Naive thymus-derived CD4-positive, alpha-beta T cell (primary cell): ENCODE measurements at regions of chr16 and their contacts with region 1.

Region 1: DNA sequence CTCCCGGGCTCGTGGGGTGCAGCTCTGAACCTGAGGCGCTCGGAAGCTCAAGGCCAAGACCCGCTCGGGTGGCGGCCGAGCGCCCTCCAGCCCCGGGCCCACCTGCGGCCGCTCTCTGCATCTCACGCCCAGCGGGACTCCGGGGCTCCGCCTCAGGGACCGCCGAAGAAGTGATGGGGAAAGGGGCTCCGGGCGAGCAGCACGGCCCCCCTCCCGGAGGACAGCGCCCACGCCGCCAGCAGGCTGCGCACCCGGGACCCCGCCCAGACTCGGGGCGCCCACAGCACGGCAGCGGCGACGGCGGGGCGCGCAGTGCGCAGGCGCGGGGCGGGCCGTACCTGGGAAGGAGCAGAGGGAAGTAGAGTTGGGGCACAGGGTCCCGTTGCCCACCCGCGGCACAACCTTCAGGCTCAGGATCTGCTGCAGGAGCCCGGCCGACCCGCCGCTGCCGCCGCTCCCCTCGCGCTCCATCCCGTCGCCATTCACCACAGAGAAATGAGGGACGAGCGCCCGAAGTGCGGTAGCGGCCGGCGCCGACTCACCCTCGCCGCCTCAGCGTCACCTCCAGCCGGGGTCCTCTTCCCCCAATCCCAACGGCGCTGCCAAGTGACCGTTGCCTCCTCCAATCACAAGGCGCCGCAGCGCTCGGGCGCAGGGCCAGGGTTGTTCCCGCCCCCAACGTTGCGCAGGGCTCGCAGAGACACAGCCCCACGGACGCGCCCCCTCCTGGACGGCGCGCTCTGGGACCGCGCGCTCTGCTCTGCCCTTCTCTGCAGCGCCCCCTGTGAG is at the start of gene TMEM170A:
- DNase-seq: peak; percentile 96 to 99 (median 99)
- ATAC-seq: peak; percentile 95
- H3K4me3 ChIP-seq: peak within 1 kb of the TSS; percentile 93
- H3K4me3 Mint-ChIP-seq: peak within 1 kb of the TSS; percentile 86 to 98 (median 93)
- H3K27ac ChIP-seq: peak within 1 kb of the TSS; percentile 93
- H3K27ac Mint-ChIP-seq: peak within 1 kb of the TSS; percentile 75 to 97 (median 93)
- H3K4me1 ChIP-seq: peaks cover 26 to 31% of the 10 kb centered on the region in 2 donors
- H3K4me1 Mint-ChIP-seq: peaks cover 31 to 49% (median 44%) of the 10 kb centered on the region in 7 donors
- H3K27me3 ChIP-seq: no peaks in the 10 kb centered on the region
- H3K27me3 Mint-ChIP-seq: peaks cover 0 to 5% (median 0%) of the 10 kb centered on the region in 5 donors
- total RNA-seq, gene TMEM170A: 31.0 to 50.9 (median 46.6) TPM

Region 2: GRCh38 chr16:74372953-74373846 is 1091.1 kb before region 1 on chr16:
- CTCF ChIA-PET with region 1: no interaction called
- POLR2A ChIA-PET with region 1: no interaction called
- intact Hi-C with region 1: loop called in 1 of 2 experiments (anchors 5 kb)
- DNase-seq: no peak
- ATAC-seq: no peak
- H3K4me3 ChIP-seq: no peak overlapping the region
- H3K4me3 Mint-ChIP-seq: no peak overlapping the region
- H3K27ac ChIP-seq: no peak overlapping the region
- H3K27ac Mint-ChIP-seq: peak overlapping the region in 2 of 9 donors; percentile 18 to 86
- H3K4me1 ChIP-seq: no peaks in the 10 kb centered on the region
- H3K4me1 Mint-ChIP-seq: peaks cover 0 to 4% (median 0%) of the 10 kb centered on the region in 7 donors
- H3K27me3 ChIP-seq: no peaks in the 10 kb centered on the region
- H3K27me3 Mint-ChIP-seq: no peaks in the 10 kb centered on the region

Region 3: GRCh38 chr16:75198135-75198600 is 266.2 kb before region 1 on chr16:
- CTCF ChIA-PET with region 1: interaction called, 4 read pairs
- POLR2A ChIA-PET with region 1: no interaction called
- intact Hi-C with region 1: loop called (anchors 1 kb)
- DNase-seq: no peak
- ATAC-seq: no peak
- H3K4me3 ChIP-seq: no peak overlapping the region
- H3K4me3 Mint-ChIP-seq: no peak overlapping the region
- H3K27ac ChIP-seq: no peak overlapping the region
- H3K27ac Mint-ChIP-seq: no peak overlapping the region
- H3K4me1 ChIP-seq: peaks cover 0 to 14% of the 10 kb centered on the region in 2 donors
- H3K4me1 Mint-ChIP-seq: peaks cover 10 to 29% (median 22%) of the 10 kb centered on the region in 7 donors
- H3K27me3 ChIP-seq: peaks cover 0 to 3% of the 10 kb centered on the region in 2 donors
- H3K27me3 Mint-ChIP-seq: peaks cover 12 to 24% (median 14%) of the 10 kb centered on the region in 5 donors

Region 4: GRCh38 chr16:75432828-75433731 is 31.2 kb before region 1 on chr16 and contains the start of gene CFDP1:
- CTCF ChIA-PET with region 1: interaction called, 9 read pairs
- POLR2A ChIA-PET with region 1: interaction called, 25 read pairs
- intact Hi-C with region 1: loop called in 1 of 2 experiments (anchors 1 kb)
- DNase-seq: peak; percentile 93 to 98 (median 95)
- ATAC-seq: peak; percentile 92
- H3K4me3 ChIP-seq: peak within 1 kb of the TSS; percentile 92
- H3K4me3 Mint-ChIP-seq: peak within 1 kb of the TSS; percentile 87 to 99 (median 94)
- H3K27ac ChIP-seq: peak within 1 kb of the TSS; percentile 94
- H3K27ac Mint-ChIP-seq: peak within 1 kb of the TSS; percentile 94 to 100 (median 97)
- H3K4me1 ChIP-seq: peaks cover 5 to 9% of the 10 kb centered on the region in 2 donors
- H3K4me1 Mint-ChIP-seq: peaks cover 19 to 53% (median 43%) of the 10 kb centered on the region in 7 donors
- H3K27me3 ChIP-seq: no peaks in the 10 kb centered on the region
- H3K27me3 Mint-ChIP-seq: no peaks in the 10 kb centered on the region
- total RNA-seq, gene CFDP1: 34.9 to 41.4 (median 39.4) TPM

Region 5: GRCh38 chr16:75483222-75483621 is 18.9 kb after region 1 on chr16:
- CTCF ChIA-PET with region 1: no interaction called
- POLR2A ChIA-PET with region 1: no interaction called
- intact Hi-C with region 1: no loop called
- DNase-seq: no peak
- ATAC-seq: no peak
- H3K4me3 ChIP-seq: no peak overlapping the region
- H3K4me3 Mint-ChIP-seq: no peak overlapping the region
- H3K27ac ChIP-seq: no peak overlapping the region
- H3K27ac Mint-ChIP-seq: no peak overlapping the region
- H3K4me1 ChIP-seq: no peaks in the 10 kb centered on the region
- H3K4me1 Mint-ChIP-seq: peaks cover 0 to 3% (median 0%) of the 10 kb centered on the region in 7 donors
- H3K27me3 ChIP-seq: no peaks in the 10 kb centered on the region
- H3K27me3 Mint-ChIP-seq: peaks cover 0 to 23% (median 7%) of the 10 kb centered on the region in 5 donors

Region 6: DNA sequence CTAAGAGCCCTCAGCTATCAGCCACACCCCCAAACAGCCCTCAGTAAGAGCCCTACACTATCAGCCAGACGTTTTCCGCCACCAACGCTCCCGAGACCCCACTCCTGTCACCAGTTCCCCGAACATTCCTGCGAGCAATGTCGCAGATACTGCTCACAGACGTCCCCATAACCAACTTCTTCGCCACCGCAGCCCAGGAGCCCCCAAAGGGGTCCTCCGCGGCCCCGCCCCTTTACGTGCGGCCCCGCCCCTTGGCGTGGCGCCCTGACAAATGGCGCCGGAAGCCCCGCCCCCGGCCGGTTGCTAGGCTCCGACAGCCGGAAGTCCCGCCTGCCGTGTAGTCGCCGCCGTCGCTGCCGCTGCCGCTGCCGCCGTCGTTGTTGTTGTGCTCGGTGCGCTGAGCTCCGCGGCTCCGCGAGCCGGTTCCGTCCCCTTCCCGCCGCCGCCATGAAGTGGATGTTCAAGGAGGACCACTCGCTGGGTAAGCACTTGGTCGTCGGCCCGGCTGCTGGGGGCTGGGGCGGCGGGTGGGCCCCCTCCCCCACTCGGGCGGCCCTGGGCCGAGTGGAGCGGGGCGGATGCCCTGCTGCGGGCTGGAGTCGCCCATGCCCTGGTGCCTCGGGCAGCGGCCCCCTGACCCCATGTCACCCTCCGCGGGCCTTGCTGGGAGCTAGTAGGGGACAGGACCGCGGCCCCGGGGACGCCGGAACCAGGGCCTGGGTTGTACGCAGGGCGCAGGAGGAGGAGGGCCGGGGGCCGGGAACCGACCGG is 101.9 kb after region 1 on chr16 and contains the start of gene GABARAPL2:
- CTCF ChIA-PET with region 1: interaction called, 4 read pairs
- POLR2A ChIA-PET with region 1: interaction called, 5 read pairs
- intact Hi-C with region 1: loop called in 1 of 2 experiments (anchors 1 kb)
- DNase-seq: peak; percentile 87 to 97 (median 92)
- ATAC-seq: peak; percentile 90
- H3K4me3 ChIP-seq: peak within 1 kb of the TSS; percentile 93
- H3K4me3 Mint-ChIP-seq: peak within 1 kb of the TSS; percentile 88 to 100 (median 96)
- H3K27ac ChIP-seq: peak within 1 kb of the TSS; percentile 90
- H3K27ac Mint-ChIP-seq: peak within 1 kb of the TSS; percentile 79 to 100 (median 92)
- H3K4me1 ChIP-seq: peaks cover 20 to 27% of the 10 kb centered on the region in 2 donors
- H3K4me1 Mint-ChIP-seq: peaks cover 25 to 50% (median 47%) of the 10 kb centered on the region in 7 donors
- H3K27me3 ChIP-seq: no peaks in the 10 kb centered on the region
- H3K27me3 Mint-ChIP-seq: peaks cover 8 to 16% (median 13%) of the 10 kb centered on the region in 5 donors
- total RNA-seq, gene GABARAPL2: 57.9 to 81.2 (median 75.6) TPM